Natural killer cell (primary cell): ENCODE measurements at regions of chr19 and their contacts with region 1.

Region 1: DNA sequence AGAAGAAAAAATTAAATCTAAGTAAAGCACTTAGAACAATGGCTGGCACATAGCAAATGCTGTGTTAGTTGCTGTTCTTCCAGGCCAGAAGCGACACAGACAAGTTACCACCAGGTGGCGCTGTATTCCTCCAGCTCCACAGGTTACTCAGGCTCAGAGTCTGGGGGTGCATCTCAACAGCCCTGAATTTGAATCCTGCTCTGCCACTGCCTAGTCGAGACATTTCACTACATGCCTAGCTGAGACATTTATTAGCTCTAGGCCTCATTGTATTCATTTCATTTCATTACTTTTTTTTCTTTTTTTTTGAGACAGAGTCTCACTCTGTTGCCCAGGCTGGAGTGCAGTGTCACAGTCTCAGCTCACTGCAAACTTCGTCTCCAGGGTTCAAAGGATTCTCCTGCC is 16.4 kb upstream of the CYP2B6 start:
- DNase-seq: peak; percentile 71 to 94
- ATAC-seq: peak; percentile 83 to 94 (median 93)
- H3K4me3 ChIP-seq: no peak overlapping the region
- H3K4me3 Mint-ChIP-seq: no peak overlapping the region
- H3K27ac ChIP-seq: no peak overlapping the region
- H3K27ac Mint-ChIP-seq: no peak overlapping the region
- H3K4me1 ChIP-seq: peaks cover 9% of the 10 kb centered on the region
- H3K4me1 Mint-ChIP-seq: peaks cover 10 to 13% of the 10 kb centered on the region in 2 donors
- H3K27me3 ChIP-seq: no peaks in the 10 kb centered on the region
- H3K27me3 Mint-ChIP-seq: peaks cover 6 to 15% of the 10 kb centered on the region in 2 donors
- CTCF ChIP-seq: peak; percentile 91

Region 2: GRCh38 chr19:40225440-40226305 is 749.0 kb before region 1 on chr19:
- intact Hi-C with region 1: no loop called
- DNase-seq: no peak
- ATAC-seq: no peak
- H3K4me3 ChIP-seq: no peak overlapping the region
- H3K4me3 Mint-ChIP-seq: peak overlapping the region; percentile 29
- H3K27ac ChIP-seq: no peak overlapping the region
- H3K27ac Mint-ChIP-seq: no peak overlapping the region
- H3K4me1 ChIP-seq: peaks cover 16% of the 10 kb centered on the region
- H3K4me1 Mint-ChIP-seq: peaks cover 23 to 27% of the 10 kb centered on the region in 2 donors
- H3K27me3 ChIP-seq: peaks cover 30% of the 10 kb centered on the region
- H3K27me3 Mint-ChIP-seq: peaks cover 29 to 36% of the 10 kb centered on the region in 2 donors
- CTCF ChIP-seq: no peak

Region 3: GRCh38 chr19:40948580-40949299 is 25.9 kb before region 1 on chr19:
- intact Hi-C with region 1: no loop called
- DNase-seq: no peak
- ATAC-seq: no peak
- H3K4me3 ChIP-seq: no peak overlapping the region
- H3K4me3 Mint-ChIP-seq: no peak overlapping the region
- H3K27ac ChIP-seq: no peak overlapping the region
- H3K27ac Mint-ChIP-seq: no peak overlapping the region
- H3K4me1 ChIP-seq: no peaks in the 10 kb centered on the region
- H3K4me1 Mint-ChIP-seq: no peaks in the 10 kb centered on the region
- H3K27me3 ChIP-seq: no peaks in the 10 kb centered on the region
- H3K27me3 Mint-ChIP-seq: peaks cover 16 to 22% of the 10 kb centered on the region in 2 donors
- CTCF ChIP-seq: no peak

Region 4: DNA sequence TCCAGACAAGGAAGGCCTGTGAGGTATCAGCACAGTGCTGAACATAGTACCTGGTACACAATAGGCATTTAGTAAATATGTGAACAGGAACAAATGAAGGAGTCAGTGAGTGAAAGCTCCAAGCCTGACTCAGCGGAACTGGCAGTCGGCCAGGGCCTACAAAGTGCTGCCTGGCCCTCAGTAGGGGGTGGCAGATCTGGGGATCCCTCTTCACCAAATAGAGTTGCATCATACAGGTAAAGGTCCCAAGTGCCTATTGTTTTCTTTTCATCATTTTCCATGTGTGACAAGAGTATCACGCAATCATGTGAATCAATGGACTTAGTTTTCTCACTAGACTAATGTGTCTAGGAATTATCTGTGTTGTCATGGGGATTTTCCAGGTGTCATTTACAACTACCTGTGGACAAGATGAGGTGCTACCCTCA is 25.7 kb after region 1 on chr19:
- intact Hi-C with region 1: no loop called
- DNase-seq: no peak
- ATAC-seq: no peak
- H3K4me3 ChIP-seq: no peak overlapping the region
- H3K4me3 Mint-ChIP-seq: no peak overlapping the region
- H3K27ac ChIP-seq: no peak overlapping the region
- H3K27ac Mint-ChIP-seq: no peak overlapping the region
- H3K4me1 ChIP-seq: no peaks in the 10 kb centered on the region
- H3K4me1 Mint-ChIP-seq: no peaks in the 10 kb centered on the region
- H3K27me3 ChIP-seq: no peaks in the 10 kb centered on the region
- H3K27me3 Mint-ChIP-seq: peaks cover 22 to 39% of the 10 kb centered on the region in 2 donors
- CTCF ChIP-seq: no peak

Region 5: GRCh38 chr19:41031649-41032328 is 57.2 kb after region 1 on chr19:
- intact Hi-C with region 1: no loop called
- DNase-seq: no peak
- ATAC-seq: no peak
- H3K4me3 ChIP-seq: no peak overlapping the region
- H3K4me3 Mint-ChIP-seq: no peak overlapping the region
- H3K27ac ChIP-seq: no peak overlapping the region
- H3K27ac Mint-ChIP-seq: no peak overlapping the region
- H3K4me1 ChIP-seq: no peaks in the 10 kb centered on the region
- H3K4me1 Mint-ChIP-seq: peaks cover 0 to 5% of the 10 kb centered on the region in 2 donors
- H3K27me3 ChIP-seq: no peaks in the 10 kb centered on the region
- H3K27me3 Mint-ChIP-seq: peaks cover 19 to 25% of the 10 kb centered on the region in 2 donors
- CTCF ChIP-seq: no peak

Region 6: GRCh38 chr19:41144403-41144802 is 169.8 kb after region 1 on chr19:
- intact Hi-C with region 1: loop called (anchors 1 kb)
- DNase-seq: peak; percentile 83 to 95
- ATAC-seq: peak; percentile 93 to 99 (median 97)
- H3K4me3 ChIP-seq: no peak overlapping the region
- H3K4me3 Mint-ChIP-seq: no peak overlapping the region
- H3K27ac ChIP-seq: no peak overlapping the region
- H3K27ac Mint-ChIP-seq: no peak overlapping the region
- H3K4me1 ChIP-seq: no peaks in the 10 kb centered on the region
- H3K4me1 Mint-ChIP-seq: no peaks in the 10 kb centered on the region
- H3K27me3 ChIP-seq: no peaks in the 10 kb centered on the region
- H3K27me3 Mint-ChIP-seq: peaks cover 10 to 21% of the 10 kb centered on the region in 2 donors
- CTCF ChIP-seq: peak; percentile 86